CD4-positive, alpha-beta T cell (primary cell): ENCODE measurements at regions of chr7 and their contacts with region 1.

Region 1: GRCh38 chr7:112939574-112940314 is 146.9 kb downstream of the GPR85 start:
- DNase-seq: peak; percentile 98 to 100 (median 99)
- ATAC-seq: peak; percentile 95
- H3K4me3 ChIP-seq: peak overlapping the region; percentile 83
- H3K4me3 Mint-ChIP-seq: peak overlapping the region; percentile 98
- H3K27ac ChIP-seq: peak overlapping the region; percentile 53 to 66
- H3K27ac Mint-ChIP-seq: peak overlapping the region; percentile 88
- H3K4me1 ChIP-seq: peaks cover 18% of the 10 kb centered on the region
- H3K4me1 Mint-ChIP-seq: peaks cover 53% of the 10 kb centered on the region
- H3K27me3 ChIP-seq: no peaks in the 10 kb centered on the region
- H3K27me3 Mint-ChIP-seq: no peaks in the 10 kb centered on the region
- CTCF ChIP-seq: no peak

Region 2: DNA sequence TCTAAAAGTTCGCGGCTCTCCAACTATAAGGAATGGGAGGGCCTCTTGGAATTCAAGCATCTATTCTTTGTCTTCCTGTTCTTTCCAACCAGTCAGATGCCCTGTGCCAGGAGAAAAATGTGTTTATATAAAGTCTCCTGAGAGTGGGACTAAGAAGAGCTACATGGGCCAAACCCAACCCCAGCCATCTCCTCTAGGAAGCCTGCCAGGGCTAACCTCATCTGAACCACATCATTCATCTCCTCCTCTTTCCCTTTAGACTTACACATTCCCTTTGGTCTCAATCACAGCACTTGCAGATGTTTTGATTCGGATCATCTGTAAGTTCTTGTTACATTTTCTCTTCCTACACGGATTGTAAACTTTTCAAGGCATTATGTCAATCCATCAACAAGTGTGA is 796.2 kb before region 1 on chr7:
- CTCF ChIA-PET with region 1: no interaction called
- POLR2A ChIA-PET with region 1: no interaction called
- intact Hi-C with region 1: no loop called
- DNase-seq: no peak
- ATAC-seq: no peak
- H3K4me3 ChIP-seq: no peak overlapping the region
- H3K4me3 Mint-ChIP-seq: no peak overlapping the region
- H3K27ac ChIP-seq: no peak overlapping the region
- H3K27ac Mint-ChIP-seq: no peak overlapping the region
- H3K4me1 ChIP-seq: no peaks in the 10 kb centered on the region
- H3K4me1 Mint-ChIP-seq: no peaks in the 10 kb centered on the region
- H3K27me3 ChIP-seq: no peaks in the 10 kb centered on the region
- H3K27me3 Mint-ChIP-seq: peaks cover 11% of the 10 kb centered on the region
- CTCF ChIP-seq: no peak

Region 3: DNA sequence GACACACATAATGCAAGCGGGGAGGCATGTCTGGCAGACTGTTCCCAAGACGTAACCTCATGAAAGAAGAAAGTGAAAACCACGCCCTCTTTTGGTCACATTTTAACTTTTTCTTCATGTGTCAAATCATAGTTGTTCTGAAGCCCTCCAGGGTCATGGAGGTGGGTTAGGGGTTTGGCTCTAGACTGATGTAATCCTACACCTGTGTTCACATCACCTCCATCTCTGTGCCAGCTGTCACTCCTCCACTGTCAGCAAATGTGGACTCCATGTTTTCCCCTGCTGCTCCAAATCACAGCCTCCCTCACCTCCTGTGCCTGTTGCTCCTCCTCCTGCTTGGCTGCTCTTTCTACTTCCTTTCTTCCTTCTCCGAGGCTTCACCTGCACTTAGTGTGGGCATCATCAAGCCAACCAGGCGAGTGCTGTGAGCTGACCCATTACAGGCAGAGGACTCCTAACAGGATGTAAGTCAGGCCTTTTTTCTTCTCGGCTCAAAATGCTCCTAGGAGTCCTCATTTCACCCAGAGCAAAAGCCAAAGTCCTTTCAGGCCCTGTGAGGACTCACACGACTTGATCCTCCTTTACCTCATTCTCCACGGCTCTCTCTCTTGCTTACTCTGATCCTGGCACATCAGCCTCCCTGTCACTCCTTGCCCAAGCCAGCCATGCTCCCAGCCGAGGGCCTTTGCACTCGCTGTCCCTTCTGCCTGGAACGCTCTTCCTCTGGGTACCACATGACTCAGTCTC is 555.9 kb before region 1 on chr7:
- CTCF ChIA-PET with region 1: no interaction called
- POLR2A ChIA-PET with region 1: no interaction called
- intact Hi-C with region 1: loop called in 1 of 2 experiments (anchors 10 kb)
- DNase-seq: peak in 3 of 14 experiments; percentile 10 to 25 (median 21)
- ATAC-seq: peak; percentile 34
- H3K4me3 ChIP-seq: no peak overlapping the region
- H3K4me3 Mint-ChIP-seq: no peak overlapping the region
- H3K27ac ChIP-seq: no peak overlapping the region
- H3K27ac Mint-ChIP-seq: no peak overlapping the region
- H3K4me1 ChIP-seq: no peaks in the 10 kb centered on the region
- H3K4me1 Mint-ChIP-seq: no peaks in the 10 kb centered on the region
- H3K27me3 ChIP-seq: no peaks in the 10 kb centered on the region
- H3K27me3 Mint-ChIP-seq: peaks cover 4% of the 10 kb centered on the region
- CTCF ChIP-seq: no peak

Region 4: GRCh38 chr7:112806156-112806555 is 133.6 kb before region 1 on chr7:
- CTCF ChIA-PET with region 1: no interaction called
- POLR2A ChIA-PET with region 1: no interaction called
- intact Hi-C with region 1: no loop called
- DNase-seq: no peak
- ATAC-seq: no peak
- H3K4me3 ChIP-seq: no peak overlapping the region
- H3K4me3 Mint-ChIP-seq: no peak overlapping the region
- H3K27ac ChIP-seq: no peak overlapping the region
- H3K27ac Mint-ChIP-seq: no peak overlapping the region
- H3K4me1 ChIP-seq: no peaks in the 10 kb centered on the region
- H3K4me1 Mint-ChIP-seq: no peaks in the 10 kb centered on the region
- H3K27me3 ChIP-seq: no peaks in the 10 kb centered on the region
- H3K27me3 Mint-ChIP-seq: peaks cover 4% of the 10 kb centered on the region
- CTCF ChIP-seq: no peak

Region 5: GRCh38 chr7:112959276-112959675 is 19.5 kb after region 1 on chr7:
- CTCF ChIA-PET with region 1: no interaction called
- POLR2A ChIA-PET with region 1: no interaction called
- intact Hi-C with region 1: no loop called
- DNase-seq: no peak
- ATAC-seq: no peak
- H3K4me3 ChIP-seq: no peak overlapping the region
- H3K4me3 Mint-ChIP-seq: no peak overlapping the region
- H3K27ac ChIP-seq: no peak overlapping the region
- H3K27ac Mint-ChIP-seq: no peak overlapping the region
- H3K4me1 ChIP-seq: no peaks in the 10 kb centered on the region
- H3K4me1 Mint-ChIP-seq: no peaks in the 10 kb centered on the region
- H3K27me3 ChIP-seq: peaks cover 0 to 8% of the 10 kb centered on the region in 2 experiments
- H3K27me3 Mint-ChIP-seq: peaks cover 62% of the 10 kb centered on the region
- CTCF ChIP-seq: no peak